IMR-90 (cell line): ENCODE measurements at regions of chr9 and their contacts with region 1.

Region 1: GRCh38 chr9:38362852-38363593 is 29.5 kb upstream of the ALDH1B1 start:
- DNase-seq: peak; percentile 85
- ATAC-seq: peak; percentile 84
- H3K4me3 ChIP-seq: no peak overlapping the region
- H3K27ac ChIP-seq: no peak overlapping the region
- H3K4me1 ChIP-seq: peaks cover 3% of the 10 kb centered on the region
- H3K27me3 ChIP-seq: peaks cover 7% of the 10 kb centered on the region
- CTCF ChIP-seq: peak; percentile 80
- POLR2A ChIP-seq: 0 out of 2 replicates have a peak, but pooled peaks have one; percentile 28
- RAD21 ChIP-seq: peak; percentile 80

Region 2: GRCh38 chr9:37592108-37592951 is 770.7 kb before region 1 on chr9 and contains the start of gene TOMM5:
- CTCF ChIA-PET with region 1: no interaction called
- POLR2A ChIA-PET with region 1: no interaction called
- dilution Hi-C with region 1: no loop called
- in situ Hi-C with region 1: loop called (anchors 10 kb)
- intact Hi-C with region 1: loop called (anchors 5 kb)
- DNase-seq: peak; percentile 94
- ATAC-seq: peak; percentile 94
- H3K4me3 ChIP-seq: peak within 1 kb of the TSS; percentile 82
- H3K27ac ChIP-seq: peak within 1 kb of the TSS; percentile 91
- H3K4me1 ChIP-seq: peaks cover 3% of the 10 kb centered on the region; the same call in 1 of the 2 replicates
- H3K27me3 ChIP-seq: no peaks in the 10 kb centered on the region
- CTCF ChIP-seq: no peak
- POLR2A ChIP-seq: peak; percentile 92
- RAD21 ChIP-seq: no peak
- total RNA-seq, gene TOMM5: 159 and 229 TPM in 2 replicates

Region 3: GRCh38 chr9:37859043-37859442 is 504.0 kb before region 1 on chr9:
- CTCF ChIA-PET with region 1: no interaction called
- POLR2A ChIA-PET with region 1: no interaction called
- dilution Hi-C with region 1: no loop called
- in situ Hi-C with region 1: no loop called
- intact Hi-C with region 1: loop called (anchors 5 kb)
- DNase-seq: peak; percentile 33
- ATAC-seq: no peak
- H3K4me3 ChIP-seq: no peak overlapping the region
- H3K27ac ChIP-seq: no peak overlapping the region
- H3K4me1 ChIP-seq: no peaks in the 10 kb centered on the region
- H3K27me3 ChIP-seq: no peaks in the 10 kb centered on the region
- CTCF ChIP-seq: peak; percentile 40
- POLR2A ChIP-seq: no peak
- RAD21 ChIP-seq: peak; percentile 26

Region 4: GRCh38 chr9:37966412-37967271 is 396.4 kb before region 1 on chr9:
- CTCF ChIA-PET with region 1: interaction called, 10 read pairs
- POLR2A ChIA-PET with region 1: no interaction called
- dilution Hi-C with region 1: no loop called
- in situ Hi-C with region 1: no loop called
- intact Hi-C with region 1: no loop called
- DNase-seq: peak; percentile 55
- ATAC-seq: no peak
- H3K4me3 ChIP-seq: no peak overlapping the region
- H3K27ac ChIP-seq: peak overlapping the region; percentile 33; the same call in 1 of the 2 replicates
- H3K4me1 ChIP-seq: peaks cover 51% of the 10 kb centered on the region
- H3K27me3 ChIP-seq: no peaks in the 10 kb centered on the region
- CTCF ChIP-seq: no peak
- POLR2A ChIP-seq: no peak
- RAD21 ChIP-seq: no peak

Region 5: DNA sequence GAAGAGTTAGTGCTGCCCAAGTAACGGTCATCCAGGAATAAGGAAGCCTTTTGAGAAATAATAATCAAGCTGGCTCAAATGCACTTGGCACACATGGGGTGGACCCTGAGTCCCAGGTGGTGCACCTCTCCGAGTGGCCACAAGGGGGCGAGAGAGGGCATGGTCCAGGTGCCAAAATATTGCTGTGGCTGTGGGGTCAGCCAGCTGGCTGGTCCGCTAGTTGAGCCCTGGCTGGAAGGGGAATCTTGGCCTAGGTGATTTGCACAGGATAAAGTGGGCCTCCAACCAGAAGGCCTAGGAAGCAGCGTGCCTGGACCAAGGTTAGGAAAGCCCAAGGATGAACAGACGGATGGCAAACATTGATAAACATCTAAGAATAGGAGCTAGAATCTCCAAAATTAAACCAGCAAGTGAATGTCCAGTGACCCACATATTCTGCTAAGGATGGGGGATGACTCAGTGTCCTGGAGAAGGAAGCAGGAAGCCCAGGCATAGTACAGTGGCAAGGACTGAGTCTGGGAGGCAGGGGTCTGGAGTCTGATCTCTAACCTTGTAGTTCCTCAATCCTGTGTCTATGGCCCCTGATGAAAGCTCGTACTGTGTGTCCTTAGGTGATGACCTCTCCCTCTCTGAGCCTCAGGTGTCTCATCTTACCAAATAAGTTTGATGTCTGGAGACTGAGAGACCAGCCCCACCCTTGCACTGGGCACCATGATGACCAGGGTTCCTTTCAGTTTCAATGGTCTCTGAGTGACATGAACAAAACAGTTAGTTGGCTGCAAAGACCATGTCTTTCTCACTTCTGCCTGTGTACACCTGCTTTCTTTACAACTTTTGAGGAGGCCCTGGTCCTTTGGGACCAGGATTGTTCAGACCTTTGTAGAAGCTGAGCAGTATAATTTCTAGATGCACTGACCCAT is 274.8 kb before region 1 on chr9:
- CTCF ChIA-PET with region 1: no interaction called
- POLR2A ChIA-PET with region 1: no interaction called
- dilution Hi-C with region 1: no loop called
- in situ Hi-C with region 1: loop called (anchors 10 kb)
- intact Hi-C with region 1: loop called (anchors 5 kb)
- DNase-seq: peak; percentile 37
- ATAC-seq: peak; percentile 84
- H3K4me3 ChIP-seq: no peak overlapping the region
- H3K27ac ChIP-seq: no peak overlapping the region
- H3K4me1 ChIP-seq: peaks cover 2% of the 10 kb centered on the region; the same call in 1 of the 2 replicates
- H3K27me3 ChIP-seq: no peaks in the 10 kb centered on the region
- CTCF ChIP-seq: peak; percentile 80
- POLR2A ChIP-seq: no peak
- RAD21 ChIP-seq: peak; percentile 77